Left cardiac atrium (tissue), 4 donors: ENCODE measurements at regions of chrX and their contacts with region 1.

Region 1: DNA sequence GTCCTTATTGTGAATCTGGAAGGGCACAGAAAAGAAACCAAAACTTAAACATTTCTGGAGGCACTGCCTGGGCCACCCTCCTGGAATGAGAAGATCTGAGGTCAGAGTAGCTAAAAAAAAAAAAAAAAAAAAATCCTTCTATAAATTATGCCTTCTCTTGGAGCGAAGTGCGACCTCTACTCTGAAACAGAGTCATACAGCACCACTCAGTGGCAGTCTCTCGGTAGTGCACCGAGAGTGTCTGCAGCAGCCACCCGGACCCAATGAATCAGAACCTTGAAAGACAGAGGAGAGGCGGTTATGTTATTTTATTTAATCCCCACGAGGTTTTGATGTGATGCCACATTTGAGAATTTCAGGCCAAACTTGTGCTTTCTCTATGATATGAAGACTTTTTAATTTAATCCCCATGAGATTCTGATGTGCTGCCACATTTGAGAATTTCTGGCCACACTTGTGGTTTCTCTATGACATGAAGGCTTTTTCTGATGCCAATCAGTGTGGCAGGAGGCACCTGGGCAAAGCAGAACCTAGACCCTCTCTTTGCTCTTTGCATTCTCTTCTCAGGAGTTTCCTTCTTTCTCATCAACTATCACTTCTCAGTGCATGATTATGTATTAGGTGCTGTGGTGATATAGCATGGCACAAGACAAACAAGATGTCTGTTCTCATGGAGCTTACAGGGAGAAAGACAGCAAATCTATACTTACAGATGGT is 5.6 kb upstream of the CT47C1 start:
- DNase-seq: peak; percentile 62
- ATAC-seq: peak; percentile 68 to 72

Region 2: GRCh38 chrX:118839334-118839958 is 227.7 kb before region 1 on chrX:
- intact Hi-C with region 1: loop called in 1 of 2 experiments (anchors 5 kb)
- DNase-seq: peak; percentile 85
- ATAC-seq: peak; percentile 92 to 96

Region 3: DNA sequence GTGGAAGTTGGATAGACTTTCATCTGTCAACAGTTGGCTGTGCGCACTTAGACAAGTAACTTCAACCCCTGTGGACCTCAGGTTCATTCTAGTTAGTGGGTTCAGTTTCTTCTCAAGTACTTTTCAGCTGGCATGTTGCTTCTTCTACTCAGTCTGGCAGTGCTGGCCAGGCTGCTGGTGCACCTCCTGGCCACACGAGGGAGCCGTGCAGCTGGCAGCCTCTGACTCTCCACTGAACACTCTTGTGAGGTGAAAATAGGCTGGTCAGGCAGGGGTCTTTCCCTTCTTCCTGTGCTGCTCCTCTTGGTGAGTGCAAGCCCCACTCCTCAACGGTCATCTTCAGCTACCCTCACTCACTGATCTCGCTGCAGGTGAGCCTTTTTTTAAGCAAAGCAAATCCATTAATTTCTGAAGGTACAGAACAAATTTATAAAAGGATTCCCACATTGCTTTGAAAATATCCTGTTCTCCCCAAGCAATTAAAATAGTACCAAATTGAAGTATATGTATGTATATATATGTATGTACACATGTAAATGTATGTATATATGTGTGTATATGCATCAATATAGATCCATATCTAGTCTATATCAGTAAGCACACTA is 62.2 kb before region 1 on chrX:
- intact Hi-C with region 1: loop called (anchors 2 to 5 kb)
- DNase-seq: peak; percentile 43
- ATAC-seq: peak; percentile 70 to 80